Heart left ventricle (tissue), 16 donors: ENCODE measurements at regions of chr17 and their contacts with region 1.

Region 1: GRCh38 chr17:15944759-15945529 is at the start of gene ADORA2B:
- DNase-seq: peak; percentile 56 to 83 (median 70)
- ATAC-seq: peak; percentile 21 to 83 (median 76)
- H3K4me3 ChIP-seq: peak within 1 kb of the TSS; percentile 42 to 74 (median 61)
- H3K27ac ChIP-seq: peak within 1 kb of the TSS in 10 of 12 donors; percentile 3 to 72 (median 52)
- H3K4me1 ChIP-seq: peaks cover 0 to 51% (median 13%) of the 10 kb centered on the region in 12 donors
- H3K27me3 ChIP-seq: peaks cover 0 to 15% (median 0%) of the 10 kb centered on the region in 9 donors
- CTCF ChIP-seq: peak; percentile 35 to 74 (median 50)
- POLR2A ChIP-seq: no peak
- total RNA-seq, gene ADORA2B: 0.65 to 3.1 (median 0.95) TPM

Region 2: GRCh38 chr17:15999439-16000350 is 54.8 kb after region 1 on chr17 and contains the starts of genes TTC19 and ZSWIM7:
- intact Hi-C with region 1: loop called in 4 of 10 experiments (anchors 5 kb)
- DNase-seq: peak; percentile 98
- ATAC-seq: peak; percentile 97 to 98 (median 98)
- H3K4me3 ChIP-seq: peak within 1 kb of the TSS; percentile 54 to 92 (median 76)
- H3K27ac ChIP-seq: peak within 1 kb of the TSS; percentile 72 to 98 (median 97)
- H3K4me1 ChIP-seq: peaks cover 4 to 42% (median 27%) of the 10 kb centered on the region in 12 donors
- H3K27me3 ChIP-seq: no peaks in the 10 kb centered on the region
- CTCF ChIP-seq: peak in 2 of 12 donors; percentile 5 to 20
- POLR2A ChIP-seq: peak; percentile 84 to 99
- total RNA-seq, gene TTC19: 23.3 to 47.0 (median 29.0) TPM
- total RNA-seq, gene ZSWIM7: 15.3 to 41.8 (median 31.4) TPM

Region 3: DNA sequence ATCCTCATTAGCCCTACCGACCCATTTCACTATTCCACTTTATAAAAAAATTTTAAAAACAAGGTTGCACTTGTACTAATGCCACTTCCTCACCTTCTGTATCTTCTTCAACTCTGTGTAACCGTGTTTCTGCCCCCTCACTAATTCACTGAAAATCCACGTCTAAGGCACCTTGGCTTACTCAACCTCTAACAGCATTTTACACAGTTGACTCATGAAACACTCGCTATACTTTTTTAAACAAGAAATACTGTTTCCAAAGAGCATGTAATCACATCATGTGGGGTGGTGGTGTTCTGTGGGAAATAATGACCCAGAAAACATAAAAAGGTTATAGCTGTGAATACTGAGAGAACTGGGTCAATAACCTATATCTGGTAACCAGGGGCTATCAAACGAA is 190.5 kb after region 1 on chr17:
- intact Hi-C with region 1: no loop called
- DNase-seq: no peak
- ATAC-seq: no peak
- H3K4me3 ChIP-seq: no peak overlapping the region
- H3K27ac ChIP-seq: no peak overlapping the region
- H3K4me1 ChIP-seq: no peaks in the 10 kb centered on the region
- H3K27me3 ChIP-seq: no peaks in the 10 kb centered on the region
- CTCF ChIP-seq: no peak
- POLR2A ChIP-seq: no peak

Region 4: DNA sequence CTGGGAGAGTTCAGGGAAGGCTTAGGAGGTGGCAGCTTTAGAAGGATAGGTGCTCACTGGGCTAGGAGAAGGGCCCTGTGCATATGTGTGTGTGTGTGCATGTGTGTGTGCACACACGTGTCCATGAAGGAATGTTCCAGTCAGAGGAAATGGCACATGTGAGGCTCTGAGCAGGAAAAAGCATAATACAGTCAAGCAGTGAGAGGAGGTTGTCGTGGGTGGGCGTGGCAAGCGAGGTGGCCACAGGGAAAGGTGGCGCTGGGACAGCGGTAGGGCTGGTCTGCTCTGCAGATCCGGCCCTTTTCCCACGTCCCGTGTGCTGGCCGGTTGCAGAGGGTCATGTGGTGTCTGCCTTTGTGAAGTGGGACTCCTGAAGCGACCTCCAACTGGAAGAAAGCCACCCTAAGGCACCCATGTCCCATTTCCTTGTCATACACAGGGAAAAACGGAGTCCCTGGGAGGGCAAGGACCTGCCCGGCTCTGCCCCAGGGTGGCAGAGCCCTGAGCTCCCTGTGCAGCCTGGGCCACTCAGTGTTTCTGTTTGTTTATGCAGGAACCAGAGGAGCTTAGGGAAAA is 1398.3 kb after region 1 on chr17:
- intact Hi-C with region 1: no loop called
- DNase-seq: peak in 1 of 5 donors; percentile 12
- ATAC-seq: peak in 1 of 4 donors; percentile 32
- H3K4me3 ChIP-seq: no peak overlapping the region
- H3K27ac ChIP-seq: no peak overlapping the region
- H3K4me1 ChIP-seq: peaks cover 0 to 5% (median 0%) of the 10 kb centered on the region in 12 donors
- H3K27me3 ChIP-seq: no peaks in the 10 kb centered on the region
- CTCF ChIP-seq: no peak
- POLR2A ChIP-seq: no peak